ENCODE measurements at regions of chr1 and their contacts with region 1.

Region 1: GRCh38 chr1:27574871-27575831 is 28.8 kb downstream of the AHDC1 start:
- DNase-seq: peak; percentile 74
- H3K4me3 ChIP-seq: peak overlapping the region in 1 of 3 experiments; percentile 7
- H3K27ac ChIP-seq: peak overlapping the region; percentile 66
- H3K4me1 ChIP-seq: peaks cover 27% of the 10 kb centered on the region
- H3K27me3 ChIP-seq: no peaks in the 10 kb centered on the region
- CTCF ChIP-seq: peak; percentile 54 to 62
- POLR2A ChIP-seq: no peak

Region 2: DNA sequence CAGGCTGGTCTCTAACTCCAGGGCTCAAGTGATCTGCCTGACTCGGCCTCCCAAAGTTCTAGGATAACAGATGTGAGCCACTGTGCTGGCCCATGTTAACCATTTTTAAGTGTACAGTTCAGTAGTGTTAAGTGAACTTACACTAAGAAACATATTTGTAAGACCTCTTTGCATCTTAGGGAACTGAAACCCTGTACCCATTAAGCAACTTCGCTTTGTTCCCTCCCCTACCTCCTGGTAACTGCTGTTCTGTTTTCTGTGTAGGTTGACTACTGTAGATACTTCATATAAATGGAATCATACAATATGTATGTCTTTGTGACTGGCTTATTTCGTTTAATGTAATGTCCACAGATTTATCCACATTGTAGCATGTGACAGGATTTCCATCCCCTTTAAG is 642.6 kb before region 1 on chr1:
- CTCF ChIA-PET with region 1: no interaction called
- POLR2A ChIA-PET with region 1: no interaction called
- dilution Hi-C with region 1: no loop called
- intact Hi-C with region 1: no loop called
- DNase-seq: no peak
- H3K4me3 ChIP-seq: no peak overlapping the region
- H3K27ac ChIP-seq: no peak overlapping the region
- H3K4me1 ChIP-seq: no peaks in the 10 kb centered on the region
- H3K27me3 ChIP-seq: no peaks in the 10 kb centered on the region
- CTCF ChIP-seq: no peak
- POLR2A ChIP-seq: no peak

Region 3: GRCh38 chr1:27589841-27590426 is 14.8 kb after region 1 on chr1:
- CTCF ChIA-PET with region 1: interaction called, 10 read pairs
- POLR2A ChIA-PET with region 1: no interaction called
- dilution Hi-C with region 1: no loop called
- intact Hi-C with region 1: no loop called
- DNase-seq: peak; percentile 47
- H3K4me3 ChIP-seq: no peak overlapping the region
- H3K27ac ChIP-seq: no peak overlapping the region
- H3K4me1 ChIP-seq: no peaks in the 10 kb centered on the region
- H3K27me3 ChIP-seq: no peaks in the 10 kb centered on the region
- CTCF ChIP-seq: no peak
- POLR2A ChIP-seq: no peak

Region 4: DNA sequence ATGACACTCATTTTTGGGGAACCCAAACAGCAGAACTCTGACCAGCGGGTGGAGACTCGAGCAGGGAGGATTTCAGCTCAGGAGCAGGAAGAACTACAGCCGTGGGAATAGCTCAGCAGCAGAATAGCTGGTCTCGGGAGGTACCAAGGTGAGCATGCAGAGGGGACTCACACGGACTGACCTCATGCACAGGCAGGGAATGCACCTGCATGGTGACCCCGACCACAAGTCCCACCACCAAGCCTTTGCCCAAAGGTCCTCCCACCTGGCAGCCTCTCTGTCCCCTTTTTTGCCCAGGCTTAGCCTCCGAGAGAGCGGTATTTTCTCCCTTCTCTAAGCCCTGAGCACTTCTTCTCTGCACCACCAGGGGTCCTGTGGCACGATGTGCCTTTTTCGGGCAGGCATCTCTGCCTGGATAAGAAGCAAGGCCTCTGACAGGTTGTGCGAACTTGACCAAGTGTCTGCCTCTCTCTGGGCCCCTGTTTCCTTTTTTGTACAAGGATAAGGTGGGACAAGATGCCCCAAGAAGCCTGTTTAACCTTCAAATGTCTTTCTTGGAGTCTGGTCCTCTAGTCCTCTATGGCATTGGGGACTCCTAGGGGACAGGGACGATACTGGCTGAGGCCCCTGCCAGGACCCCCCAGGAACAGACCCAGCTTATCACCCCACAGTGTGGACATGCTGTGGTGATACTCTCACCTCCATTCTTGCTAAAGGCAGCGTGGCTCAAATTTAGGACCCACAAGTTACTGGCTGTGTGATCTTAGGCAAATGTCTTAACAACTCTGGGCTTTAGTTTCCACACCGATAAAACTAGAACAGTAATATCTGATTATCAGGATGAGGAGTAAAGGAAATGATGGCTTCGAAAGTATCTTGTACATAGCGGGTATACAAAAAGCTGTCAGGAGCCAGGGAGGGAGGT is 68.8 kb after region 1 on chr1:
- CTCF ChIA-PET with region 1: no interaction called
- POLR2A ChIA-PET with region 1: no interaction called
- dilution Hi-C with region 1: no loop called
- intact Hi-C with region 1: no loop called
- DNase-seq: peak; percentile 54
- H3K4me3 ChIP-seq: no peak overlapping the region
- H3K27ac ChIP-seq: no peak overlapping the region
- H3K4me1 ChIP-seq: no peaks in the 10 kb centered on the region
- H3K27me3 ChIP-seq: no peaks in the 10 kb centered on the region
- CTCF ChIP-seq: peak; percentile 74 to 86
- POLR2A ChIP-seq: no peak

Region 5: DNA sequence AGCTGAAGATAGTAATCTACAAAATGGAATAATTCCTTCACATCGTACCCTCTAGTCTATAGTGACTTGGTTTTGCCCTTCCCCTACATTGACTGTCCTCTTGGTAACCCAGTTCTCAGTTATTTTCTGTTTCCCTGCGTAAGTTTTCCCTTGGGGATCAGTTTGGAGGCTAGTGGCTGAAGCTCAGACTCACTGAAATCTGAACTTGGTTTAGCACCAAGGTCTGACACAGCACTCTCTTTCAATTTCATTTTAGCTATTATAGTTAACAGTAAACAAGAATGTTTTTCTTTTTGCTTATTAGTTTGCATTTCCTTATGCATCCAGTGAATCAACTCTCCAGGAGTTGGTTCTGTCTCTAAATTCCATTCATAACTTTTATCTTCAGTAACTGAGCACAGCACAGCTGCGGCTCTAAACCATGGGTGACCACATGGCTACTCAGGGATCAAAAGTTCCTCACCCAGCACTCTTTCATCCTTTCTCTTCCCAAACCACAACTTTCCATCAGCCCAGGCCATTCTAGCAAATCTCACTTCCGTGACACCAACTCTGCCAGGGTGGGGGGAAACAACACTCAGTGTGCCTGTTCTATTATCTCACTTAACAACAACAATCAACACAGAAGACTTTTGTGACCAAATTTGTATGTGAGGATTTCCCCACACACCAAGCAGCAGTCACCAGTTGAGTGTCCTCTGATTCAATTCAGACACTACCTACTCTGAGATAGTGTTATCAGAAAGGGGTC is 114.4 kb after region 1 on chr1:
- CTCF ChIA-PET with region 1: no interaction called
- POLR2A ChIA-PET with region 1: no interaction called
- dilution Hi-C with region 1: no loop called
- intact Hi-C with region 1: no loop called
- DNase-seq: no peak
- H3K4me3 ChIP-seq: no peak overlapping the region
- H3K27ac ChIP-seq: no peak overlapping the region
- H3K4me1 ChIP-seq: no peaks in the 10 kb centered on the region
- H3K27me3 ChIP-seq: peaks cover 18 to 32% of the 10 kb centered on the region in 2 experiments
- CTCF ChIP-seq: no peak
- POLR2A ChIP-seq: no peak

Region 6: DNA sequence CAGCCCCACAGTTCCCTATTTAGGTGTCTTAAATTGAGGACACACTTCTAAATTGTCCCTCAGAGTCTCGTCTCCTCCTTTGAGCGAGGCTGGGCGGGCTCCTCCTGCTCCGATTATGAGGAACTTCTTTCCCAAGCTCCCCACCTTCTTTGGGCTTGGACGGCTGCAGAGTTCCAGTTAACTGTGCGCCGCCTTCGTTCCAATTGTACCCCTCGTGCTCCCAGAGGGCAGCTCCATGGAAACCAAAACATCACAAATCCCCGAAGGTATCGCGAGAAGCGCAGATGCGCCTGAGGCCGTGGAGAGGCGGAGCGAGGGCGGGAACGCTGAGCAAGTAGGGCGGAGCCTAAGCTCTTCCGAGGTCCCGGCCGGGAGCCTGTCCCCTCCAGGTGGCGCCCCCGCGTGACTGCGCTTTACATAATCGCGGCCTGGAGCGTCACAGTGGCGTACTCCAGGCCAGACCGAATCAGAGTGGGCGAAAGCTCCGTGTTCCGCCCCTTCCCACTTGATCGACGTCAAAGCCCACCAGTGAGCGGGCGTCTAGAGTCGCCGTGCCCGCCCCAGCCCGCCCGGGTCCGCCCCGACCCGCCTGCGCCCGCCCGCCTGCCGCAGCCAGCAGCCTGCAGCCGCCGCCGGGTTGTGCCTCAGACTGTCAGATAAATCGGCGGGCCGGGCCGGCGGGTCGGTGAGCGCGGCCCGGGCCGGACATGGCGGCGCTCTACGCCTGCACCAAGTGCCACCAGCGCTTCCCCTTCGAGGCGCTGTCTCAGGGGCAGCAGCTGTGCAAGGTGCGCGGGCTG is 150.4 kb after region 1 on chr1 and contains the start of gene FAM76A:
- CTCF ChIA-PET with region 1: no interaction called
- POLR2A ChIA-PET with region 1: no interaction called
- dilution Hi-C with region 1: no loop called
- intact Hi-C with region 1: no loop called
- DNase-seq: peak; percentile 100
- H3K4me3 ChIP-seq: peak within 1 kb of the TSS; percentile 86 to 97 (median 92)
- H3K27ac ChIP-seq: peak within 1 kb of the TSS; percentile 73
- H3K4me1 ChIP-seq: peaks cover 13% of the 10 kb centered on the region
- H3K27me3 ChIP-seq: no peaks in the 10 kb centered on the region
- CTCF ChIP-seq: peak; percentile 48 to 70
- POLR2A ChIP-seq: peak; percentile 49
- total RNA-seq, gene FAM76A: 11.9 and 12.8 TPM in 2 replicates

Measured in endothelial cell of umbilical vein (primary cell).